Right cardiac atrium (tissue), 5 donors: ENCODE measurements at regions of chr14 and their contacts with region 1.

Region 1: DNA sequence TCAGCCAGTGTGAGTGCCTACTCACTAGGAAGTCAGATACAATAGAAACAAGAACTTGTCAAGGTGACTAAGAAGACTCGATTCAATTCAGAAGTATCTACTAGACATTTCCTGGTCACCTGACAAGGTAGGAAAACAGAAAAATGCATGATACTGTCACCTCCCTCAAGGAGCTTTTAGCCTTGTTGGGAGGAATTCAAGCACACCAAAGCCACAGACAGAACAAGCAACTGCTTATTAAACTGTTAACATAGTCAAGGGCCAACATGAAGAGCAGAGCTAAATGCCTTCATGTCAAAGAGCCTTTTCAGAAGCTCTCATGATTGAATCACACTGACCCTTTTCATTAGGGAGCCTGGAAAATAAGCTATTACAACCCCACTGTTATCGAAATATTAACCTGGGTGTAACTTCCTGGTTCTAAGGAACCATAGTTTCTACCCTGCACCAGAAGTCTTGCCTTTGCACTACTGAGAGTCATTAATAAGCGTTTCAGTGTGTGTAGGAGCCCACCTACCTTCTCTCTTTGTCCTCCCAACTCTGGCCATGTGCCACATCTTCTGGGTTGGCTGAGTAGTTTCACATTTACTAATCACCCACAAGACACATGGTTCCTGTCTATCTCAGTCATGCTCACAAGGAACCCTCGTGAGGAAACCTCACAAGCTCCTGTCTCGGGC is 31.0 kb upstream of the LGALS3 start:
- DNase-seq: no peak
- ATAC-seq: no peak
- H3K4me3 ChIP-seq: no peak overlapping the region
- H3K27ac ChIP-seq: peak overlapping the region; percentile 39
- H3K4me1 ChIP-seq: peaks cover 8% of the 10 kb centered on the region
- H3K27me3 ChIP-seq: no peaks in the 10 kb centered on the region

Region 2: DNA sequence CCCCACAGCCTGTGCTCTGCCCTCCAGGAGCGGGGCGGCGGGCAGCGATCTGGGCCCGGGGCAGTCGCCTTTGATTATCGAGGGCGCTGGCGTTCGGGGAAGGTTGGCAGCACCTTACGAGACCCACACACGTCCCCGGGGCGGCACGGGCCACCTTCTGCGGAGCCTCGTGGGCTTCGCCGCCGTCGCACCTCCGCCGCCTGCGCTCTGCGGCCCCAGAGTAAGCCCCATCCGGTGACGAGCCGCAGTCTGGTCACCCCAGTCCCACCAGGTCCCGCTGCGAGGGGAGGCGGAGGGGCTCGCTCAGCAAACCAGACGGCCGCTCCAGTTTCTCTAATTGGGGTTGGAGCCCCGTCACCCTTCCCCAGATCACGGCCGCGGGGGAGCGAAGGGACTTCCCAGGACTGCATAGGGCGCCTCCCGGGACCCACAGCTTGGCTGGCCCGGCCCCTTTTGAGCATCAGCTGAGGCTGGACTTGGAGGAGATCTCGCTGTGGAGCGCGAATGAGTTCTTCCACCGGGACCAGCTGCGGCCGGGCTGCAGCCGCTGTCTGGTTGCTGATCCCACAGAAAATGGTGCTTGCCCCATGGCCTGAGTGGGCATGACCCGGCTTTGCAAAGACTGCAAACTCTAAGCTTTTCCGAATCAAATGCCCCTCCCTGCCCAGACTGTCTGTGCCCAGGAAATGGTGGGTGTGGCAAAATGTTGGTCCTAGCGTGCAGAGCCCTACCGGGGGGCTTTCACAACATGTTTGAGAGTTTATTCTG is 31.6 kb after region 1 on chr14:
- intact Hi-C with region 1: loop called in 3 of 4 experiments (anchors 2 to 5 kb)
- DNase-seq: peak; percentile 77 to 91 (median 90)
- ATAC-seq: peak; percentile 70 to 75
- H3K4me3 ChIP-seq: peak overlapping the region; percentile 88
- H3K27ac ChIP-seq: peak overlapping the region; percentile 99
- H3K4me1 ChIP-seq: peaks cover 16% of the 10 kb centered on the region
- H3K27me3 ChIP-seq: no peaks in the 10 kb centered on the region

Region 3: DNA sequence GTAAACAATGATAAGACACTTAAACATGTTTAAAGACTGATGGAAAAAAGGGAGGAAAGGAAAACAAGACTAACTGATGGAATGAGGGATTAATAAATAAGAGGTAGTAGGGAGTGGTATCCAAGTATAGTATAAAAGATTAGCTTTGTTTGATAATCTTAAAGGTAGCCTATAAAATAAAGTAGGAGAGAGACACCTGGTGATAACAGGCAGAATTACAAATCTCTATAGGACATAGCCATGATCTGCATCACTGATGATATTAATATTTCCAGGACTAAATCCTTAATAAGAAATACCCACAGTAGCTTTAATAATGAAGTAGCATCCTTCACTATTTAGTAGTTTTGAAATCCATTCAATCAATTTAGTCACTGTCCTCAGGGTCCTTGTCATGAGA is 63.0 kb after region 1 on chr14:
- intact Hi-C with region 1: loop called in 3 of 4 experiments (anchors 5 kb)
- DNase-seq: no peak
- ATAC-seq: peak; percentile 62 to 69
- H3K4me3 ChIP-seq: no peak overlapping the region
- H3K27ac ChIP-seq: no peak overlapping the region
- H3K4me1 ChIP-seq: no peaks in the 10 kb centered on the region
- H3K27me3 ChIP-seq: no peaks in the 10 kb centered on the region